Prostate gland (tissue), 2 donors: ENCODE measurements at regions of chrX and their contacts with region 1.

Region 1: DNA sequence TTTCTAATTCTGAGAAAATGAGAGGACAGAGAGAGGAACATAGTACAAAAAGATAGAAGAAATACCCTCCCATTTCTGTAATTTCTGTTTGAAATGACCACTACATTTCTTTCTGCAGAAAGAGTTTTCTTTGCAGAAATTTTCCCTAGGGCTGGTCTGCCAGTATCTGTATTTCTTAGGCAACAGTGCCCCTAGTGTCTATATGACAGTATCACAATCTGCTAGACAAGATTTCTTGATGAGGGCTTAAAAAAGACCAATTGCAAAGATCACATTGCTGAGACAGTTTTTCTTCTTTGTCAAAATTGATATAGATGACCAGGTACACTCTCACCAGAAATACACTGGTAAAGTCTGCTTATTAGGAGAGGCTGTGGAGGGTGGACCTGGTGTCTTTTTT is 81.0 kb upstream of the ZDHHC15 start:
- DNase-seq: no peak
- H3K4me3 ChIP-seq: no peak overlapping the region
- H3K27ac ChIP-seq: no peak overlapping the region
- H3K4me1 ChIP-seq: no peaks in the 10 kb centered on the region
- H3K27me3 ChIP-seq: no peaks in the 10 kb centered on the region
- CTCF ChIP-seq: peak in 3 of 4 experiments; percentile 45 to 54 (median 51)
- POLR2A ChIP-seq: no peak

Region 2: DNA sequence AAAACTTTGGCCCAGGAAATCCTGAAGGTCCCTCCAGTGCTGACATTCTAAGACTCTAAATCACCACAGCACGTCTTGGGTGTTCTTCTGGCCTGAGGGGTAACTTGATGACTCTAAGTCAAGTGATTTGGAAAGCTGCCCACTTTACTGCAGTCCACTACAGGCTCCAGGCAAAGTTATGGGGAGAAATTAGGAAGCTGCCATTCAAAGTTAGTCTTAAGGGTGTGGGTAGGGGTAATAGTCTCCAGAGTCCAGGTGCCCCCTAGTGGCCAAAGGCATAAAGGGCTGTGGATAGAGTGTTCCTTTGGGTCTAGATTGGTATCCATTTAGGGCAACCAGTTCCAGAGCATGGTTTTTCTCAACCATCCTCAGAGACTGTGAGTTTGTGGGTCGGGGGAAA is 1221.2 kb before region 1 on chrX:
- intact Hi-C with region 1: loop called (anchors 5 kb)
- DNase-seq: peak; percentile 31
- H3K4me3 ChIP-seq: no peak overlapping the region
- H3K27ac ChIP-seq: no peak overlapping the region
- H3K4me1 ChIP-seq: no peaks in the 10 kb centered on the region
- H3K27me3 ChIP-seq: no peaks in the 10 kb centered on the region
- CTCF ChIP-seq: peak in 3 of 4 experiments; percentile 49 to 63 (median 54)
- POLR2A ChIP-seq: no peak

Region 3: GRCh38 chrX:75156021-75156945 is 447.6 kb before region 1 on chrX and contains the start of gene ABCB7:
- intact Hi-C with region 1: loop called (anchors 10 kb)
- DNase-seq: peak; percentile 70
- H3K4me3 ChIP-seq: peak within 1 kb of the TSS; percentile 45 to 54
- H3K27ac ChIP-seq: peak within 1 kb of the TSS; percentile 67 to 77
- H3K4me1 ChIP-seq: no peaks in the 10 kb centered on the region
- H3K27me3 ChIP-seq: no peaks in the 10 kb centered on the region
- CTCF ChIP-seq: peak in 1 of 4 experiments; percentile 21
- POLR2A ChIP-seq: no peak
- total RNA-seq, gene ABCB7: 41.1 to 64.3 TPM

Region 4: GRCh38 chrX:75522565-75523431 is 81.0 kb before region 1 on chrX and contains the start of gene ZDHHC15:
- intact Hi-C with region 1: loop called (anchors 10 kb)
- DNase-seq: peak; percentile 21
- H3K4me3 ChIP-seq: peak within 1 kb of the TSS; percentile 29 to 40
- H3K27ac ChIP-seq: peak within 1 kb of the TSS; percentile 56 to 62
- H3K4me1 ChIP-seq: no peaks in the 10 kb centered on the region
- H3K27me3 ChIP-seq: no peaks in the 10 kb centered on the region
- CTCF ChIP-seq: peak in 1 of 4 experiments; percentile 12
- POLR2A ChIP-seq: no peak
- total RNA-seq, gene ZDHHC15: 2.6 to 2.9 TPM